ENCODE measurements at regions of chr16 and their contacts with region 1.

Region 1: DNA sequence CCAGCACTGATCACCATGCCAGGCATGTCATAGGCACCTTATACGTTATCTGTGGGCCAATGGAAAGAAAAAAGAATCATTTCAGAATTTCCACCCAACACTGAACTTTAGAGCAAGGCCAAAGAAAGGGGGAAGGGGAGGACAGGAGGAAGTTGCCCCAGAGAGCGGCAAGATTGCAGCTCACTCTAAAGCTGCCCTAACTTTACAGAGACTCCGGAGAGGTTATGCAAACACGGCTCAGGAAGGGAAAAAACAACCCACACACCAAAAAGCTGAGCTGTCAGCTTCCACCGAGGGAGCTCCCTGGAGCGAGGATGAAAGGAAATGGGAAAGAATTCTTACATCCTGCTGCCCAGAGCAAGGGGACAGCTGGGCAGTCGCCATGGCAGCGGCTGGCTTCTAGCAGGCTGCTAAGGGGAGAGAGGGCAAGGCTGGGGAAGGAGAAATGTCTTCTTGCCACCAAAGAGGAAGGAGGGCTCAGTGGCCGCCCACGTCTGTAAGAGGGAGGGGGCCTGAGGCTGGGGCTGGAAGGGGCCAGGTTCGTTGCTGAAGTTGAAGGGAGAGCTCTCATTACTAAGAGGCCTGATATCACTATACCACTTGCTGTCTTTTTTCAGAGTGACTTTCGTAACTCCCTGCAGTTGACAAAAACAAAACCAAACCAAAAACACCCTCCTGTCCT is 18.2 kb downstream of the COTL1 start:
- DNase-seq: peak in 7 of 14 experiments; percentile 35 to 73 (median 58)
- ATAC-seq: peak; percentile 24
- H3K4me3 ChIP-seq: peak overlapping the region; percentile 46
- H3K4me3 Mint-ChIP-seq: peak overlapping the region; percentile 86
- H3K27ac ChIP-seq: peak overlapping the region; percentile 82 to 85
- H3K27ac Mint-ChIP-seq: peak overlapping the region; percentile 96
- H3K4me1 ChIP-seq: peaks cover 95% of the 10 kb centered on the region
- H3K4me1 Mint-ChIP-seq: peaks cover 80% of the 10 kb centered on the region
- H3K27me3 ChIP-seq: no peaks in the 10 kb centered on the region
- H3K27me3 Mint-ChIP-seq: no peaks in the 10 kb centered on the region
- CTCF ChIP-seq: no peak

Region 2: GRCh38 chr16:84478172-84478947 is 121.3 kb before region 1 on chr16:
- CTCF ChIA-PET with region 1: no interaction called
- POLR2A ChIA-PET with region 1: no interaction called
- intact Hi-C with region 1: no loop called
- DNase-seq: no peak
- ATAC-seq: no peak
- H3K4me3 ChIP-seq: no peak overlapping the region
- H3K4me3 Mint-ChIP-seq: no peak overlapping the region
- H3K27ac ChIP-seq: no peak overlapping the region
- H3K27ac Mint-ChIP-seq: no peak overlapping the region
- H3K4me1 ChIP-seq: no peaks in the 10 kb centered on the region
- H3K4me1 Mint-ChIP-seq: no peaks in the 10 kb centered on the region
- H3K27me3 ChIP-seq: no peaks in the 10 kb centered on the region
- H3K27me3 Mint-ChIP-seq: no peaks in the 10 kb centered on the region
- CTCF ChIP-seq: no peak

Region 3: DNA sequence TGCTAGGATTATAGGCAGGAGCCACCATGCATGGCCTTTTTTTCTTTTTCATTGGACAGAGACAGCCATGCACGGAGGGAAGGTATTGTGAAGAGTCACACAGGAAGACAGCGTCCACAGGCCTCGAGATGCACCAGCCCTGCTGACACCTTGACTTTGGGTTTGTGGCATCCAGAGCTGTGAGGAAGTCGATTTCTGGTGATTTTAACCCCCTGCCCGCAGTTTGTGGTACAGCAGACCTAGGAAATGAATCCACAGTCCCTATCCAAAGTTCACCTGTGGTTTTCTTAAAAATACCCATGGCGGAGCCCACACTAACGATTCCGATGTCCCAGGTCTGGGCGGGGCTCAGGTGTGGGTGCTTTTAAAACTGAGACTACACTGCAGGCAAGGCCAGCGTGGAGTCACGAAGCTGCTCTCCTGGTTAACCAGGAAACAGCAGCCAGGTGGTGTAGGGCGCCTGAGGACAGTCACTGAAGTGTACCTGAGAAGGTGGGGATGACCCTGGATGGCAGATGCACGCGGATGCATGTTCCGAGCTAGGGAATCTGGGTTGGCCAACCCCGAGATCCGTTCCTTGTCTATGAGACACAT is 80.8 kb before region 1 on chr16:
- CTCF ChIA-PET with region 1: interaction called, 3 read pairs
- POLR2A ChIA-PET with region 1: interaction called, 15 read pairs
- intact Hi-C with region 1: no loop called
- DNase-seq: peak; percentile 42 to 87 (median 57)
- ATAC-seq: peak; percentile 51
- H3K4me3 ChIP-seq: peak overlapping the region; percentile 0
- H3K4me3 Mint-ChIP-seq: peak overlapping the region; percentile 30
- H3K27ac ChIP-seq: peak overlapping the region; percentile 6 to 21
- H3K27ac Mint-ChIP-seq: peak overlapping the region; percentile 78
- H3K4me1 ChIP-seq: peaks cover 58% of the 10 kb centered on the region
- H3K4me1 Mint-ChIP-seq: peaks cover 63% of the 10 kb centered on the region
- H3K27me3 ChIP-seq: no peaks in the 10 kb centered on the region
- H3K27me3 Mint-ChIP-seq: no peaks in the 10 kb centered on the region
- CTCF ChIP-seq: no peak

Region 4: DNA sequence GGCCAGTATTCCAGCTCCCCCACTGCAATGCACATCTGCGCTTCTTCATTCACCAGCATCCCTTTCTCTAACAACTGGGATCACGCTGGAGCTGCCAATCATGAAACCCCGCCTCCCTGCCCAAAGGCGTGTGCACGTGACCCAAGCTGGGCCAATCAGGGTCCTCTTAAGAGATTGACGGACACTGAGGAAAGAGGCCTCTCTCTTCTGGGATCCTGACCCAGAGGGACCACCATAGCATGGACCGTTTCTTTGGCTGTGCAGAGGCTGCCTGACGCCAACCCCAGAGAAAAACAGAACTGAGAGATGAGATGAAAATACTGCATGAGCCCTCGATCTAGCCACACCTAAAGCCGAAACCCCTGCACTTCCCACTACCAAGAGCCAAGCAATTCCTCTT is 13.8 kb before region 1 on chr16:
- CTCF ChIA-PET with region 1: no interaction called
- POLR2A ChIA-PET with region 1: interaction called, 11 read pairs
- intact Hi-C with region 1: no loop called
- DNase-seq: no peak
- ATAC-seq: no peak
- H3K4me3 ChIP-seq: no peak overlapping the region
- H3K4me3 Mint-ChIP-seq: no peak overlapping the region
- H3K27ac ChIP-seq: no peak overlapping the region
- H3K27ac Mint-ChIP-seq: peak overlapping the region; percentile 52
- H3K4me1 ChIP-seq: peaks cover 27% of the 10 kb centered on the region
- H3K4me1 Mint-ChIP-seq: peaks cover 40% of the 10 kb centered on the region
- H3K27me3 ChIP-seq: no peaks in the 10 kb centered on the region
- H3K27me3 Mint-ChIP-seq: no peaks in the 10 kb centered on the region
- CTCF ChIP-seq: no peak

Region 5: GRCh38 chr16:84851192-84852127 is 251.8 kb after region 1 on chr16:
- CTCF ChIA-PET with region 1: no interaction called
- POLR2A ChIA-PET with region 1: no interaction called
- intact Hi-C with region 1: no loop called
- DNase-seq: no peak
- ATAC-seq: no peak
- H3K4me3 ChIP-seq: no peak overlapping the region
- H3K4me3 Mint-ChIP-seq: no peak overlapping the region
- H3K27ac ChIP-seq: no peak overlapping the region
- H3K27ac Mint-ChIP-seq: no peak overlapping the region
- H3K4me1 ChIP-seq: no peaks in the 10 kb centered on the region
- H3K4me1 Mint-ChIP-seq: no peaks in the 10 kb centered on the region
- H3K27me3 ChIP-seq: no peaks in the 10 kb centered on the region
- H3K27me3 Mint-ChIP-seq: peaks cover 18% of the 10 kb centered on the region
- CTCF ChIP-seq: no peak

Measured in CD4-positive, alpha-beta T cell (primary cell).